Sigmoid colon (tissue), 7 donors: ENCODE measurements at regions of chr19 and their contacts with region 1.

Region 1: DNA sequence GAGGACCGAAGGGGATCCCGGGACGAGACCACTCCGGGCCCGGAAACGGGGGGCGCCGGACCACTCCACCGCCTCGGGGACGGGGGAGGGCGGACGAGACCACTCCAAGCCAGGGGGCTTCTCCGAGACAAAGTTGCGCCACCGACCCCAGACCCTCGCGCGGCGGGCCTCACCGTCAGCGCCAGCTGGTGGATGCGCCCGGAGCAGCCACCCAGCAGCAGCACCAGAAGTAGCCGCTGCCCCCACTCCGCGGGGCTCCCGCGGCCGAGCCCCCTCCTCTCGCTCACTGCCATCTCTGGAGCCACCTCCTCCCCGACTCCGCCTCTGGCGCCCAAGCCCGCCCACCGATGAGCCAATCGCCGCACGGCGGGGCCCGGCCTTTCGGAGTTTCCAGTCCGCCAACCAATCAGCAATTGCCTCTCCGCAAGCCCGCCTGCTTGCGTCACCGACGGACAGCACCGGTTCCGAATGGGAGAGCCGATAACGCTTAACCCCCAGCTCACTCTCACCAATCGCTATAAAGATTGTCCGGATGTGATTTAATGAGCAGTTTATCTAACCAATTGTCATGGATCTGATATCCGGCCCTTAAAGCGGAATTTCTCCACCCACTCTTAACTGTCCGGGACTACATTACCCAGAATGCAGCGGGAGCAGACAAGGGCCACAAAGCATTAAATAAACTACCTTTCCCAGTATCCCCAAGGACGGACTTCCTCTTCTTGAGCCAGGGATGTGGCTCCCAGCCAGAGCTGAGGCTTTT is at the start of gene GPR108:
- DNase-seq: peak; percentile 100
- H3K4me3 ChIP-seq: peak within 1 kb of the TSS; percentile 54 to 92 (median 88)
- H3K27ac ChIP-seq: peak within 1 kb of the TSS; percentile 95 to 97 (median 96)
- H3K4me1 ChIP-seq: peaks cover 0 to 63% (median 45%) of the 10 kb centered on the region in 4 donors
- H3K27me3 ChIP-seq: no peaks in the 10 kb centered on the region
- CTCF ChIP-seq: no peak
- EP300 ChIP-seq: peak in 1 of 4 donors; percentile 2
- POLR2A ChIP-seq: peak in 1 of 2 donors; percentile 54
- total RNA-seq, gene GPR108: 44.5 to 67.3 (median 58.8) TPM

Region 2: GRCh38 chr19:6460101-6460853 is 277.2 kb before region 1 on chr19:
- intact Hi-C with region 1: loop called (anchors 2 kb)
- DNase-seq: peak; percentile 97
- H3K4me3 ChIP-seq: peak overlapping the region; percentile 70 to 85 (median 78)
- H3K27ac ChIP-seq: peak overlapping the region; percentile 83 to 93 (median 88)
- H3K4me1 ChIP-seq: peaks cover 0 to 31% (median 22%) of the 10 kb centered on the region in 4 donors
- H3K27me3 ChIP-seq: peaks cover 10 to 25% (median 18%) of the 10 kb centered on the region in 3 donors
- CTCF ChIP-seq: peak; percentile 45 to 81 (median 72)
- EP300 ChIP-seq: no peak
- POLR2A ChIP-seq: peak in 1 of 2 donors; percentile 22

Region 3: DNA sequence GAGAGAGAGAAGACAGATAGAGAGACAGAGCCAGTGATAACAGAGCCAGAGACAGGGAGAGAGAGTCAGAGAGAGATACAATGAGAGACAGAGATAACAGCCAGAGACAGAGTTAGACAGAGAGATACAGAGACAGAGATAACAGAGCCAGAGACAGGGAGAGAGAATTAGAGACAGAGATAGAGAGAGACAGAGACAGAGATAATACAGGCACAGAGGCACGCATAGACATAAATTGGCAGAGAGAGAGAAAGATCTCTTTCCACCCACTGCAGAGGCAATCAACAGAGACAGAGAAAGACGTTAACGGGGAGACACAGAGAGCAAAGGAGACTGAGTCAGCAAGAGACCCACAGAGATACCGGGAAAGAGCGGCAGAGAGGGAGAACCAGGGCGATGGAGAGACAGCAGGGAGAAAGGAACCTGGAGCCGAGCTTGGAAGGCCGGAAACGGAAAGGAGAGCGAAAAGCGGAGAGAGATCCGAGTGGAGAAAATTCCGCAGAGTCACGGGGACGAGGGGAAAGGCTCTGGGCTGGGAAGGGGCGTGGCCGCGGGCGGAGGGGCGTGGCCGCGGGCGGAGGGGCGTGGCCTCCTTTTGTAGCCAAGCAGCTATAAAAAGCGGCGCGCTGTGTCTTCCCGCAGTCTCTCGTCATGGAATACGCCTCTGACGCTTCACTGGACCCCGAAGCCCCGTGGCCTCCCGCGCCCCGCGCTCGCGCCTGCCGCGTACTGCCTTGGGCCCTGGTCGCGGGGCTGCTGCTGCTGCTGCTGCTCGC is 206.9 kb before region 1 on chr19 and contains the start of gene TNFSF9:
- intact Hi-C with region 1: loop called (anchors 5 kb)
- DNase-seq: peak; percentile 95
- H3K4me3 ChIP-seq: peak within 1 kb of the TSS; percentile 36 to 60 (median 50)
- H3K27ac ChIP-seq: peak within 1 kb of the TSS; percentile 46 to 74 (median 62)
- H3K4me1 ChIP-seq: peaks cover 0 to 38% (median 10%) of the 10 kb centered on the region in 4 donors
- H3K27me3 ChIP-seq: peaks cover 8 to 35% (median 33%) of the 10 kb centered on the region in 3 donors
- CTCF ChIP-seq: no peak
- EP300 ChIP-seq: peak in 1 of 4 donors; percentile 27
- POLR2A ChIP-seq: peak in 1 of 2 donors; percentile 37
- total RNA-seq, gene TNFSF9: 0.16 to 1.8 (median 0.36) TPM in 3 of 4 donors, not detected in the other

Region 4: DNA sequence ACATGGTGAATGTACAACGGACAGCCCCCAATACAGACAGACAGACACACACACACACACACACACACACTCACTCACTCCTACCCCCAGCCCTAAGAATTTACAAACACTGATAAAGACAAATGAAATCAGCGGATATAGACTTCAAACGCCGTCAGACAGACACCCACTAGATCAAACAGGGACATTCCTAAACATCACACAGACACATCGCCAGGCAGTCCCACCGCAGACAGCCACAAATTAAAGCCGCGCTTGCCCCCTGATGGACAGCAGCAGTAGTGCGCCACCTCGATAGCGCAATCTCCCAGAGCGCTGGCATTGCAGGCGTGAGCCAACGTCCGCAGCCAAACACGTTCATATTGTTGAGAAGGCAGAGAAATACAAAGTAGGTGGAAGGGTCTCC is 125.2 kb after region 1 on chr19:
- intact Hi-C with region 1: loop called (anchors 2 kb)
- DNase-seq: peak; percentile 84
- H3K4me3 ChIP-seq: peak overlapping the region in 3 of 4 donors; percentile 13 to 42 (median 37)
- H3K27ac ChIP-seq: peak overlapping the region in 1 of 4 donors; percentile 47
- H3K4me1 ChIP-seq: peaks cover 0 to 9% (median 7%) of the 10 kb centered on the region in 4 donors
- H3K27me3 ChIP-seq: peaks cover 0 to 5% (median 0%) of the 10 kb centered on the region in 3 donors
- CTCF ChIP-seq: peak; percentile 52 to 89 (median 87)
- EP300 ChIP-seq: no peak
- POLR2A ChIP-seq: no peak

Region 5: GRCh38 chr19:7535035-7535992 is 797.8 kb after region 1 on chr19 and contains the start of gene PNPLA6:
- intact Hi-C with region 1: loop called (anchors 10 kb)
- DNase-seq: peak; percentile 98
- H3K4me3 ChIP-seq: peak within 1 kb of the TSS; percentile 72 to 89 (median 84)
- H3K27ac ChIP-seq: peak within 1 kb of the TSS; percentile 87 to 97 (median 96)
- H3K4me1 ChIP-seq: peaks cover 0 to 27% (median 16%) of the 10 kb centered on the region in 4 donors
- H3K27me3 ChIP-seq: no peaks in the 10 kb centered on the region
- CTCF ChIP-seq: no peak
- EP300 ChIP-seq: no peak
- POLR2A ChIP-seq: peak; percentile 46 to 69
- total RNA-seq, gene PNPLA6: 35.2 to 77.0 (median 44.1) TPM